Activated T-helper 2 cell treated with anti-CD3 and anti-CD28 coated beads, Interferon-gamma antibody, Interleukin-2, Interleukin-4, amounts not matched to agents 10 μg/mL and 5 μg/mL and 100 μg/mL, durations not matched to agents 14 hours and 24 hours and 36 hours (primary cell): ENCODE measurements at regions of chr2 and their contacts with region 1.

Region 1: GRCh38 chr2:168002021-168002553 is 245.3 kb downstream of the STK39 start:
- DNase-seq: no peak
- H3K4me3 Mint-ChIP-seq: no peak overlapping the region
- H3K27ac Mint-ChIP-seq: peak overlapping the region; percentile 51
- H3K4me1 Mint-ChIP-seq: peaks cover 17% of the 10 kb centered on the region
- H3K27me3 Mint-ChIP-seq: no peaks in the 10 kb centered on the region

Region 2: DNA sequence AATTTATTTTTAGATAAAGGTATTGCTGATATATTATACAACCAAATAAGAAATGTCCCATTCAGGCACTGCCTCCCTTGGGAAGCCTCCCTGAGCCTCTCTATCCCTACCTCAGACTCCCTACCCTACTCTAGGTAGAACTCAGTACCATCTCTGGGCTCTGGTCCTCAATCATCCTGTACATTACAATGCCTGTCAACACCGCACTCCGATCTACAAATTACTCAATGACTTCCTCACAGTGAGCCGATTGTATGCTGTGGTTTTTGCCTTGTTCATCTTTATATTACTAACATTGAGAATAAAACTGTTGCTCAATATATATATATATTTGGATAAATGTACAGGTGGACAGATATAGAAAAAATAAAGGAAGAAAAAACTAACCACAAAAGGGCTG is 37.8 kb after region 1 on chr2:
- intact Hi-C with region 1: loop called (anchors 1 kb)
- DNase-seq: no peak
- H3K4me3 Mint-ChIP-seq: no peak overlapping the region
- H3K27ac Mint-ChIP-seq: no peak overlapping the region
- H3K4me1 Mint-ChIP-seq: peaks cover 60% of the 10 kb centered on the region
- H3K27me3 Mint-ChIP-seq: no peaks in the 10 kb centered on the region

Region 3: DNA sequence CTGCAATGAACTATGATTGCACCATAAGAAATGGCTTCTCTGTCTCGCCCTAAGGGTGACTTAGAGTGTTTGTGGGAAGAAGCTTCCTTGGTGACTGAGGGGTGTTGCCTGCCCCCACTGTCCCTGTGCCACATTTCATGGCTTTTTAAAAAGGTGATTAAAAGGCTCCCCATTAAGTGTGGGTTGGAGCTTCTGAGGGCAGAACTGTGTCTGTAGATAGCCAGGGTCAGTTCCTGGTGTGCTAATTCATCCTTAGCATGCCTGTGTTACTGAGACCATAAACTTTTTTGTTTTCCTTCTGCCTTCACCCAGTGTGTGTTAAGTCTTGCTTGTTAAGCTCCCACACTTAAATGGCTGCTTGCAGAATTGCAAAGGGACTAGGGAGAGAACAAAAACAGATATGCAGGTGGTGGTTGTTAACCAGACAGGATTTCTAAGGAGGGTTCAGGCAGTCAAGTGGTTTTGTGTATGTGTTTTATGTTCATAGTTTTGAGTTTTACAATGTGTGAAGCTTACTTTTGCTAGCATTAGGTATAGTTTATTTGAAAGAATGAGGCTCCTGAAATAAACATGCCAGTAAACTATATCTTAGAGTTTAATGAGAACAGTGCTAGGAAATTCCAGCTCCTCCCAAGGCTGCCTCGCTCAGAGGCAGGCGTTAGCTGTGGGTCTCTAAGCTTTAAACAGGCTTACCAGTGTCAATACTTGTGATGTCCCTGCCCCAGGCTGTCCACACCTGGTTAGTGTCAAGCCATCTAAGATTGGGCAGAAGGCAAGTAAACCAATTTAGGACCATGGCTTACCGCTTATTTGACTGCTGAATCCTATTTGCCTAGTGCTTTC is 468.5 kb after region 1 on chr2:
- intact Hi-C with region 1: no loop called
- DNase-seq: no peak
- H3K4me3 Mint-ChIP-seq: no peak overlapping the region
- H3K27ac Mint-ChIP-seq: no peak overlapping the region
- H3K4me1 Mint-ChIP-seq: peaks cover 44% of the 10 kb centered on the region
- H3K27me3 Mint-ChIP-seq: no peaks in the 10 kb centered on the region